Activated T-helper 1 cell treated with anti-CD3 and anti-CD28 coated beads, Interleukin-12 subunit alpha, Interleukin-12 subunit beta, Interleukin-2, Interleukin-4 antibody, amounts not matched to agents 30 ng/mL and 10 ng/mL and 1 ng/mL, durations not matched to agents 14 hours and 24 hours and 36 hours (primary cell): ENCODE measurements at regions of chr2 and their contacts with region 1.

Region 1: GRCh38 chr2:61993444-61994024 is 88.1 kb downstream of the COMMD1 start:
- DNase-seq: no peak
- H3K4me3 Mint-ChIP-seq: no peak overlapping the region
- H3K27ac Mint-ChIP-seq: no peak overlapping the region
- H3K4me1 Mint-ChIP-seq: no peaks in the 10 kb centered on the region
- H3K27me3 Mint-ChIP-seq: no peaks in the 10 kb centered on the region

Region 2: GRCh38 chr2:61710711-61711110 is 282.8 kb before region 1 on chr2:
- intact Hi-C with region 1: no loop called
- DNase-seq: no peak
- H3K4me3 Mint-ChIP-seq: no peak overlapping the region
- H3K27ac Mint-ChIP-seq: no peak overlapping the region
- H3K4me1 Mint-ChIP-seq: peaks cover 8% of the 10 kb centered on the region
- H3K27me3 Mint-ChIP-seq: no peaks in the 10 kb centered on the region

Region 3: GRCh38 chr2:61910603-61911002 is 82.9 kb before region 1 on chr2:
- intact Hi-C with region 1: loop called (anchors 5 kb)
- DNase-seq: no peak
- H3K4me3 Mint-ChIP-seq: no peak overlapping the region
- H3K27ac Mint-ChIP-seq: no peak overlapping the region
- H3K4me1 Mint-ChIP-seq: peaks cover 15% of the 10 kb centered on the region
- H3K27me3 Mint-ChIP-seq: no peaks in the 10 kb centered on the region

Region 4: GRCh38 chr2:62195421-62196277 is 202.1 kb after region 1 on chr2 and contains the start of gene B3GNT2:
- intact Hi-C with region 1: no loop called
- DNase-seq: peak; percentile 75
- H3K4me3 Mint-ChIP-seq: peak within 1 kb of the TSS; percentile 87
- H3K27ac Mint-ChIP-seq: peak within 1 kb of the TSS; percentile 89
- H3K4me1 Mint-ChIP-seq: peaks cover 36% of the 10 kb centered on the region
- H3K27me3 Mint-ChIP-seq: no peaks in the 10 kb centered on the region
- total RNA-seq, gene B3GNT2: 32.8 and 37.3 TPM in 2 replicates